HEK293 (cell line): ENCODE measurements at regions of chr7 and their contacts with region 1.

Region 1: GRCh38 chr7:1181640-1182039 is 21.6 kb upstream of the ZFAND2A start:
- H3K4me3 ChIP-seq: no peak overlapping the region
- H3K27ac ChIP-seq: no peak overlapping the region
- H3K4me1 ChIP-seq: no peaks in the 10 kb centered on the region
- CTCF ChIP-seq: no peak

Region 2: DNA sequence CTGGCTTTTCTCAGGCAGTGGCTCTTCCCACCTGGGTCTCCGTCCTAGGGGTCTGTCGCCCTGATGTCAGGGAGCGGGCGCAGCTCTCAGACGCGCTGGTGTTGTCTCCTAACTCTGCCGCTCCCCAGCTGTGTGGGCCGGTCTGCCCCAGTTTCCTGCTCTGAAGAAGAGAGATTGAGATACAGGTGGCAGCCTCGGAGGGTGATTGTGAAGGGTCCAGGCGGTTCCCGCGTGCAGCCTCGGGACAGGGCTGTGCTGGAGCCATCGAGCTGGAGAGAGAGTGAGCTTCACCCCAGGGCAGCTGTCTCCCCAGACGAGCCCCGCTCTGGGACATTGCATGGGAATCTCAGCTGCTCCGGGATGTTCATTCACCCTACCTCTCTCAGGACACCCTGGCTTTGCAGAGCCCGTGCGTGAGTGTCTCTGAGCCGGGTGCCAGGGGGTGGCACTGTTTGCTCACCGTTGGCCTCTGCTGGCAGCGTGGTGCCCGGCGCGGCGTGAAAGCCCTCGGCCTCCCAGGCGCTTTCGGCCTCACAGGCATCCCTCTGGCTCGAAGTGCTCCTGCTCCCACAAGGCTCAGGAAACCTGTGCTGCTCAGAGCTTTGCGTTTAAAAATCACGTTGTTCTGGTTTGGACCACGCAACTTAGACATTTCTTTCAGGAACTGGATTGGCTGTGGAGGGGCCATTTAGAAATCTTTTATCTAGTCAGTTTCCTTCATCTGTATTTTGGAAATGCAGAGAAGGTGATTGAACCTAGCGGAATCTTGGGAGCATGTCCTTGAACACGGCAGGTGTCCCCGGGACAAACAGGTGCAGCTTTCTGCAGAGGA is 12.2 kb after region 1 on chr7:
- CTCF ChIA-PET with region 1: interaction called, 34 read pairs
- POLR2A ChIA-PET with region 1: interaction called, 5 read pairs
- H3K4me3 ChIP-seq: no peak overlapping the region
- H3K27ac ChIP-seq: no peak overlapping the region
- H3K4me1 ChIP-seq: no peaks in the 10 kb centered on the region
- CTCF ChIP-seq: peak; percentile 87

Region 3: GRCh38 chr7:2288503-2288902 is 1106.9 kb after region 1 on chr7:
- CTCF ChIA-PET with region 1: no interaction called
- POLR2A ChIA-PET with region 1: no interaction called
- H3K4me3 ChIP-seq: no peak overlapping the region
- H3K27ac ChIP-seq: no peak overlapping the region
- H3K4me1 ChIP-seq: no peaks in the 10 kb centered on the region
- CTCF ChIP-seq: no peak